Activated CD4-positive, alpha-beta memory T cell treated with anti-CD3 and anti-CD28 coated beads for 36 hours (primary cell): ENCODE measurements at regions of chr15 and their contacts with region 1.

Region 1: DNA sequence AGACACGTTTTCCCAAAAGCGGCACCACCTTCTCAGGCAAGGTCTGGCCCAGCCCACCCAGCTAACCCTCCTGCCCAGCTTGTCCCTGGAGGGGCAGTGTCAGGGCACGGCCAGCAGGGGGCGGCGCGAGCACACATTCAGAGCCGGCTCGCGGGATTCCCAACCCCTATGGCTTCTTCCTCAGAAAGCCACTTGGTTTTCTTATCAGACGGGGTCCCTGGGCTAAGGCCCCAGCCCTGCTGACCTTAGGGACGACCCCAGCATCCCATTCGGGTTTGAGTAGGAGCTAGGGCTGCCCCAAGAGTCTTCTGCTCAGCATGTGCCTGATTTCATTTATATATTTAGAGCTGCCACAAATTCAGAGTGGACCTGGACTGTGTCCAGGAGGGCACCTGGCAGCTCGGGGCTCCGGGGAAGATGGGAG is 14.5 kb downstream of the RLBP1 start:
- DNase-seq: peak; percentile 82
- H3K4me3 Mint-ChIP-seq: no peak overlapping the region
- H3K27ac Mint-ChIP-seq: no peak overlapping the region
- H3K4me1 Mint-ChIP-seq: peaks cover 33% of the 10 kb centered on the region
- H3K27me3 Mint-ChIP-seq: no peaks in the 10 kb centered on the region

Region 2: DNA sequence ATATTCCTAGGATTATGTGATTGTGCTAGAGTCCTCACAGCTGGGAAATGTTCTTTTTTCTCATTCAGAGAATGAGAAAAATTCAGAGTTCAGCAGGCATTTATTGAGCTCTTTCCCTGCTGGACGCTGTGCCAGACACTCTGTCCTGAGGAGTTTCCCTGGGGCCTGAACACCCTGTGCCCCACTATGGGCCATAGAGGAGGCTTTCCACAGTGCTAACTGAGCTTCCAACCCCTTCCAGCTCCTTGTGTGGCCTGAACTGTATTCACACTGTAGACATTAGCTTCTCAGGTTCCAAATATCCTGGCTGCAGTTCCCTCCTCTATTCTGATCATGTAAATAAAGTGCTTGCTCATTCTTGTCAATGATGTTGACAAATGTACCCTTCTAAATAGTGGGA is 108.6 kb before region 1 on chr15:
- CTCF ChIA-PET with region 1: interaction called, 10 read pairs
- POLR2A ChIA-PET with region 1: no interaction called
- intact Hi-C with region 1: no loop called
- DNase-seq: no peak
- H3K4me3 Mint-ChIP-seq: no peak overlapping the region
- H3K27ac Mint-ChIP-seq: no peak overlapping the region
- H3K4me1 Mint-ChIP-seq: peaks cover 32% of the 10 kb centered on the region
- H3K27me3 Mint-ChIP-seq: no peaks in the 10 kb centered on the region

Region 3: GRCh38 chr15:89221543-89221942 is 14.6 kb after region 1 on chr15 and contains the start of gene RLBP1:
- CTCF ChIA-PET with region 1: interaction called, 25 read pairs
- POLR2A ChIA-PET with region 1: no interaction called
- intact Hi-C with region 1: no loop called
- DNase-seq: peak; percentile 45
- H3K4me3 Mint-ChIP-seq: no peak within 1 kb of the TSS
- H3K27ac Mint-ChIP-seq: no peak within 1 kb of the TSS
- H3K4me1 Mint-ChIP-seq: peaks cover 6% of the 10 kb centered on the region
- H3K27me3 Mint-ChIP-seq: no peaks in the 10 kb centered on the region
- total RNA-seq, gene RLBP1: not detected

Region 4: GRCh38 chr15:89278307-89278706 is 71.4 kb after region 1 on chr15:
- CTCF ChIA-PET with region 1: interaction called, 26 read pairs
- POLR2A ChIA-PET with region 1: no interaction called
- intact Hi-C with region 1: no loop called
- DNase-seq: no peak
- H3K4me3 Mint-ChIP-seq: no peak overlapping the region
- H3K27ac Mint-ChIP-seq: no peak overlapping the region
- H3K4me1 Mint-ChIP-seq: peaks cover 4% of the 10 kb centered on the region
- H3K27me3 Mint-ChIP-seq: no peaks in the 10 kb centered on the region

Region 5: GRCh38 chr15:89329329-89330084 is 122.6 kb after region 1 on chr15:
- CTCF ChIA-PET with region 1: interaction called, 19 read pairs
- POLR2A ChIA-PET with region 1: interaction called, 3 read pairs
- intact Hi-C with region 1: loop called (anchors 2 kb)
- DNase-seq: peak; percentile 59
- H3K4me3 Mint-ChIP-seq: no peak overlapping the region
- H3K27ac Mint-ChIP-seq: peak overlapping the region; percentile 64
- H3K4me1 Mint-ChIP-seq: peaks cover 48% of the 10 kb centered on the region
- H3K27me3 Mint-ChIP-seq: no peaks in the 10 kb centered on the region

Region 6: DNA sequence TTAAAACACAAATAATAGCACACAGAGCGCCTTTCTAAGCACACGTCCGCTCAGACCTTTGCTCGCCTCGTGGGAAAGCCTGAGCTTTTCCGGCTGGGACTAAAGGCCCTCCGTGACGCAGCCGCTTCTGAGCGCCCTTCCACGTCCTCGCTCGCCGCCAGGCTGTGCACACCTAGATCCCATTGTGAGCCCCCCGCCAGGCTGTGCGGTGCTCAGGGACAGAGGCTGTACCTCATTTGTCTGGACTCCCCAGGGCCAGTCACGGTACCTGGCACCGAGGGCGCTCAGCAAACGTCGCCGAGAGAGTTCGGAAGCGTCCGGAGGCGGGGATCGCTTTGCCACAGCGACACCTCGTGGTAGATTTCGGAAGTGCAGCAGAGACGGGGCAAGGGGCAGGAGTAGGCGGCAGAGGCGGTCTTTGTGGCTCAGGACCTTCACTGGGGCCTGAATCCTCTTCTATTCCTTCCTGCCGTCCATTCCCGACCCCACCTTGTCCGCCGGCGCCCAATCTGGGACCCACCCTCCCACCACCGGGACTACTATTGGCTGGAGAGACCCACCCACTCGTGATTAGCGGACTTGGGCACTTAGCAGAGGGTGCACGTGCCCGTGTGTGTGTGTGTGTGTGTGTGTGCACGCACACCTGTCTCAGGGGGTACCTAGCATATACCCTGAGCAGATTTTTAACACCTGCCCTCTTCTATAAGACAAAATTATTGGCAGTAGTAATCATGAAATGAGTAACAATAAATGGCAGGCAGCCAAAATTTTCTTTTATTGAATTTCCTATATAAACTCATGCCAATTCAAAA is 223.8 kb after region 1 on chr15:
- CTCF ChIA-PET with region 1: interaction called, 10 read pairs
- POLR2A ChIA-PET with region 1: no interaction called
- intact Hi-C with region 1: loop called (anchors 10 kb)
- DNase-seq: peak; percentile 92
- H3K4me3 Mint-ChIP-seq: peak overlapping the region; percentile 69
- H3K27ac Mint-ChIP-seq: no peak overlapping the region
- H3K4me1 Mint-ChIP-seq: peaks cover 6% of the 10 kb centered on the region
- H3K27me3 Mint-ChIP-seq: peaks cover 19% of the 10 kb centered on the region

Region 7: GRCh38 chr15:89614164-89614563 is 407.2 kb after region 1 on chr15:
- CTCF ChIA-PET with region 1: no interaction called
- POLR2A ChIA-PET with region 1: no interaction called
- intact Hi-C with region 1: no loop called
- DNase-seq: no peak
- H3K4me3 Mint-ChIP-seq: no peak overlapping the region
- H3K27ac Mint-ChIP-seq: no peak overlapping the region
- H3K4me1 Mint-ChIP-seq: no peaks in the 10 kb centered on the region
- H3K27me3 Mint-ChIP-seq: no peaks in the 10 kb centered on the region